PC-9 (cell line): ENCODE measurements at regions of chr14 and their contacts with region 1.

Region 1: DNA sequence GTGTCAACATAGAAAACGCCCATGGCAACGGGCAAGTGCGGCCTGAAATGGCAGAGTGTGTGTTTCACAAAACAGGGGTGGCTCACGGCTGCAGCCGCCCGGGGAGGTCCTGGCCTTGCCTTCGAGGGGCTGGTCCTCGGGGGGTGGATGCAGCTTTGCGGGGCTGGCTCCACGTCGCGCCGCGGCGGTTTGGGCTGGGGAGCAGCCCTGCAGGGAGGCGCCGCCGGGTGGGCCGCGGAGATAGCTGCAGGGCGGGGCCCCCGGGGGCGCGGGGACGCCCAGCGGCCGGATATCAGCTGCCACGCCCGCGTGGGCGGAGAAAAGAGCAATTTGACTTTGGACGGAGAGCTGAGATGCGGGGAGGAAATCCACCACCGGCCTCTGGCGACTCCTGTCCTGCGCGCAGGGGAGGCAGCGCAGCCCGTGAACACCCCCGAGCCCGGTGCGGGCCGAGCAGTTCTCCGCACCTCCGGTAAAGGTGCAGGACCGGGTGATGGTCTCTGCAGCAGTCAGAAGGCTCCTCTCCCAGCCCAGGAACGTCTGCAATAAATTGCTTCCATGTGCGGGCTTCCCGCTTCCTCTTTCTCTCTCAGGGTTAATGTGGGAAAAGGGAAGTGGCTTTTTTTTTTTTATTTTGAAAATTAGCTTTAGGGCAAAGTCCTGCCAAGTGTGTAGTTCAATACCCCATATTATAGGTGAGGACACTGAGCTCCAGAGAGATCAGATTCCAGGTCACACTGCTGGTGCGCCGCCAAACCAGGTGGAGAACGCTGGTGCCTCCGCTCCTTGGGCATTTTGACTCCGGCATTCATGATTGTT is 110.5 kb downstream of the ARF6 start:
- DNase-seq: peak; percentile 78 to 80
- H3K4me3 ChIP-seq: peak overlapping the region; percentile 63
- H3K27ac ChIP-seq: peak overlapping the region; percentile 95
- H3K4me1 ChIP-seq: peaks cover 88% of the 10 kb centered on the region
- H3K27me3 ChIP-seq: no peaks in the 10 kb centered on the region
- CTCF ChIP-seq: no peak

Region 2: GRCh38 chr14:49862089-49862673 is 141.2 kb before region 1 on chr14:
- CTCF ChIA-PET with region 1: interaction called, 9 read pairs
- POLR2A ChIA-PET with region 1: interaction called, 13 read pairs
- intact Hi-C with region 1: loop called (anchors 1 kb)
- DNase-seq: peak; percentile 62 to 81
- H3K4me3 ChIP-seq: peak overlapping the region; percentile 100
- H3K27ac ChIP-seq: peak overlapping the region; percentile 92
- H3K4me1 ChIP-seq: peaks cover 35% of the 10 kb centered on the region; the same call in 1 of the 2 replicates
- H3K27me3 ChIP-seq: no peaks in the 10 kb centered on the region
- CTCF ChIP-seq: peak; percentile 100

Region 3: GRCh38 chr14:49897968-49898367 is 105.5 kb before region 1 on chr14:
- CTCF ChIA-PET with region 1: interaction called, 3 read pairs
- POLR2A ChIA-PET with region 1: interaction called, 6 read pairs
- intact Hi-C with region 1: loop called (anchors 1 kb)
- DNase-seq: peak in 1 of 2 experiments; percentile 62
- H3K4me3 ChIP-seq: peak overlapping the region; percentile 99; the same call in 1 of the 2 replicates
- H3K27ac ChIP-seq: peak overlapping the region; percentile 96
- H3K4me1 ChIP-seq: peaks cover 29% of the 10 kb centered on the region
- H3K27me3 ChIP-seq: no peaks in the 10 kb centered on the region
- CTCF ChIP-seq: no peak

Region 4: GRCh38 chr14:49959822-49960408 is 43.5 kb before region 1 on chr14:
- CTCF ChIA-PET with region 1: no interaction called
- POLR2A ChIA-PET with region 1: interaction called, 28 read pairs
- intact Hi-C with region 1: loop called (anchors 1 kb)
- DNase-seq: peak; percentile 70 to 88
- H3K4me3 ChIP-seq: no peak overlapping the region
- H3K27ac ChIP-seq: peak overlapping the region; percentile 88
- H3K4me1 ChIP-seq: peaks cover 53% of the 10 kb centered on the region
- H3K27me3 ChIP-seq: no peaks in the 10 kb centered on the region
- CTCF ChIP-seq: no peak

Region 5: DNA sequence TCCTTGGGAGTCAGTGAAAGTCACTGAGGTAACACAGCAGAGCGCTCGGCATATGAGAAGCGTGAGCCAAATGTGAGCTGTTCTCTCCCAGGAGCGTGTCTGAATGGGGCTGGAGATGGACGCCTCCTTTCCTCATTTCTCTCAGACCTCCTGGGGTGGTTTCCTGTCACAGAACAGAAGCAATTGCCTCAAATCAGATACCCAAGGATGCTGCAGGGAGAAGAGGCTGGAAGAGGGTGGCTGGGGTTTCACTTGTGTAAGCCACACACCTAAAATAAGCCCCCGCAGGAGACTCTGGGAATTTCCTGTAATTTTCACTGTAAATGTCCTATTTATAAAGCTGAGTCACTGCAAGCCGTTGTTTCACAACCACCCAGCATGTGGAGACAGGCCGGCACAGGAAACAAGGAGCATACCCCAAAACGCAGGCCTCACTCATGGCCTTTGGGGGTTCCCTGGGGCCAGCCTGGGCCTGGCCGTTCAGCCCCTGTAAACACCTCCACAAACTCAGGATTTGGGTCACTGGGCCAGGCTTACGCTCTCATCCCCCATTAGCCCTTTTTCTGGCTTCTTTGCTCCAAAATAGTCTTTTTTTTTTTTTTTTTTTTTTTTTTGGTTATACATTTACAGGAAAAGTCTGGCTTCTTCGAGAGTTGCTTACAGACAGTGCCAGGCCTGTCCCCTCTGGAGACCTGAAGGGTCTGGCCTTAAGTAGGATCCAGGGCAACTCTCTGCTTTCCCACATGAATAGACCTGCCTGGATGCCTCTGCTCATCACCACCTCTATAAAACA is 57.6 kb after region 1 on chr14:
- CTCF ChIA-PET with region 1: interaction called, 6 read pairs
- POLR2A ChIA-PET with region 1: interaction called, 11 read pairs
- intact Hi-C with region 1: loop called (anchors 1 kb)
- DNase-seq: peak; percentile 31 to 77
- H3K4me3 ChIP-seq: peak overlapping the region; percentile 37; the same call in 1 of the 2 replicates
- H3K27ac ChIP-seq: peak overlapping the region; percentile 97
- H3K4me1 ChIP-seq: peaks cover 49% of the 10 kb centered on the region
- H3K27me3 ChIP-seq: no peaks in the 10 kb centered on the region
- CTCF ChIP-seq: no peak

Region 6: GRCh38 chr14:50736932-50737419 is 733.6 kb after region 1 on chr14:
- CTCF ChIA-PET with region 1: no interaction called
- POLR2A ChIA-PET with region 1: interaction called, 14 read pairs
- intact Hi-C with region 1: no loop called
- DNase-seq: no peak
- H3K4me3 ChIP-seq: no peak overlapping the region
- H3K27ac ChIP-seq: no peak overlapping the region
- H3K4me1 ChIP-seq: peaks cover 32% of the 10 kb centered on the region
- H3K27me3 ChIP-seq: no peaks in the 10 kb centered on the region
- CTCF ChIP-seq: no peak